AG04449 (cell line): ENCODE measurements at regions of chr1 and their contacts with region 1.

Region 1: DNA sequence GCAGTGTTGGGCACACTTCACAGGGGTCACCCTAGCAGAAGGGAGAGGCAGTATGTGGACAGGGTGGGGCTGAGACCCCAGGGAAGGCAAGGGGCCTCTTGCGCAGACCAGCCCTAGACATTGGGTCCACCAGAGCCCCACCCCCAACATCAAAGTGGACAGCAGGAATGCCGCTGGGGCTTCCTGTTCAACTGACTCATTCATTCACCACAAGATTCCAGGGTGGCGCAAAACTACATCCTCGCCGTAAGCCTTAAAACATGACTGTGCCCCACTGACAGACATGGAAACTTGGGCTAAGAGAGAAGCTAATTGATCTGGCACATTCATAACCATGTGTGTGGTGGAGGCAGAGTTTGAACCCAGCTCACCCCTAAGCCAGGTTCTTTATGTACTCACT is 14.0 kb downstream of the COL16A1 start:
- DNase-seq: peak; percentile 86
- H3K4me3 ChIP-seq: no peak overlapping the region
- CTCF ChIP-seq: no peak

Region 2: GRCh38 chr1:31705080-31705866 is 15.5 kb after region 1 on chr1:
- CTCF ChIA-PET with region 1: interaction called, 6 read pairs
- POLR2A ChIA-PET with region 1: interaction called, 23 read pairs
- DNase-seq: no peak
- H3K4me3 ChIP-seq: peak overlapping the region; percentile 80
- CTCF ChIP-seq: peak; percentile 61